Brain microvascular endothelial cell (primary cell): ENCODE measurements at regions of chr5 and their contacts with region 1.

Region 1: GRCh38 chr5:96336351-96336985 is 96.6 kb downstream of the PCSK1 start:
- DNase-seq: peak; percentile 92
- H3K4me3 ChIP-seq: no peak overlapping the region
- H3K27ac ChIP-seq: peak overlapping the region; percentile 22
- H3K27me3 ChIP-seq: no peaks in the 10 kb centered on the region
- CTCF ChIP-seq: peak; percentile 90

Region 2: GRCh38 chr5:95959888-95960666 is 376.4 kb before region 1 on chr5:
- in situ Hi-C with region 1: loop called (anchors 10 kb)
- DNase-seq: peak; percentile 36
- H3K4me3 ChIP-seq: peak overlapping the region; percentile 81
- H3K27ac ChIP-seq: peak overlapping the region; percentile 96
- H3K27me3 ChIP-seq: no peaks in the 10 kb centered on the region
- CTCF ChIP-seq: no peak

Region 3: GRCh38 chr5:96509721-96510333 is 173.4 kb after region 1 on chr5:
- in situ Hi-C with region 1: no loop called
- DNase-seq: peak; percentile 41
- H3K4me3 ChIP-seq: no peak overlapping the region
- H3K27ac ChIP-seq: peak overlapping the region; percentile 26
- H3K27me3 ChIP-seq: no peaks in the 10 kb centered on the region
- CTCF ChIP-seq: no peak

Region 4: GRCh38 chr5:96601811-96602244 is 265.4 kb after region 1 on chr5:
- in situ Hi-C with region 1: loop called (anchors 25 kb)
- DNase-seq: peak; percentile 82
- H3K4me3 ChIP-seq: no peak overlapping the region
- H3K27ac ChIP-seq: no peak overlapping the region
- H3K27me3 ChIP-seq: no peaks in the 10 kb centered on the region
- CTCF ChIP-seq: peak; percentile 76